Brain microvascular endothelial cell (primary cell): ENCODE measurements at regions of chr9 and their contacts with region 1.

Region 1: GRCh38 chr9:105191508-105192121 is 52.8 kb upstream of the SLC44A1 start:
- DNase-seq: no peak
- H3K4me3 ChIP-seq: no peak overlapping the region
- H3K27ac ChIP-seq: no peak overlapping the region
- H3K27me3 ChIP-seq: no peaks in the 10 kb centered on the region
- CTCF ChIP-seq: no peak

Region 2: DNA sequence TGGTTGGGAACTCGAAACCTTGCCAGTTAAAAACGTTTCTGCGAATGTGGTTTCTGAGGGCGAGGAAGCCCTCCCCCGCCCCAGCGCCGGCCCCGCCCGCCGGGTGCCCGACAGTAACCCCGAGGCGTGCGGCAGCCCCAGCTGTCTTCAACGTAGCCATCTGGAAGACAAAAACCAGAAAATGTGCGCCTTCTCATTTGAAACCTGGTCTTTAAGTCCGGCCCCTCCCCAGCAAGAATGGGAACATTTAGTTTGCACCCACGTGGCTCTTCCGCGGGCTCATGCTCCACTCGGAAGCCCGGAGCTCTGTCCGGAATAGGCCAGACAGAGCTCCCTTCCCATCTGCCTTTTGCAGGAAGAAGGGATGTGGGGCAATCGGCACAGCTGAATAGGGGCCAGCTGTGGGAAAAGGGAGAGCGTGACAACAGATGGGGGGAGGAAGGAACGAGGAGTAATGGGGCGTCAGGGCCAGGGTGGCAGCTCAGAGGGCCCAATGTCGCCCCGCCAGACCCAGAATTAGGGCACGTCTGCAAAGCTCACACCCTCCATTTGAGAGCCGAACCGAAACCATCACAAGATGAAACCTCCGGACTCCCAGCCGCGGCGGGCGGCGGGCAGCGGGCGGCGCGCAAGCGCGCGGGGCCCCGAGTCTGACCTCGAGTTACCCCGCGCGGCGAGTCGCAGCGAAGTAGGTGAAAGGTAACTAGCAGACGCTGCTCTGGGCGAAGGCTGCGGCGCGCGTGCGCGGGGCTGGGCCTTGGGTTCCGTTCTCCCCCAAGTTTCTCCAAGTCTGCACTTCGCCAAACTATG is 200.3 kb before region 1 on chr9:
- in situ Hi-C with region 1: no loop called
- DNase-seq: peak; percentile 85
- H3K4me3 ChIP-seq: peak overlapping the region; percentile 68
- H3K27ac ChIP-seq: peak overlapping the region; percentile 98
- H3K27me3 ChIP-seq: no peaks in the 10 kb centered on the region
- CTCF ChIP-seq: no peak

Region 3: GRCh38 chr9:105385381-105385985 is 193.9 kb after region 1 on chr9:
- in situ Hi-C with region 1: loop called (anchors 25 kb)
- DNase-seq: no peak
- H3K4me3 ChIP-seq: no peak overlapping the region
- H3K27ac ChIP-seq: no peak overlapping the region
- H3K27me3 ChIP-seq: no peaks in the 10 kb centered on the region
- CTCF ChIP-seq: no peak